ENCODE measurements at regions of chr9 and their contacts with region 1.

Region 1: GRCh38 chr9:126500684-126501382 is 112.9 kb upstream of the LMX1B start:
- DNase-seq: peak; percentile 42 to 81 (median 66)
- ATAC-seq: peak; percentile 67
- H3K4me3 ChIP-seq: no peak overlapping the region
- H3K4me3 Mint-ChIP-seq: peak overlapping the region; percentile 55
- H3K27ac ChIP-seq: no peak overlapping the region
- H3K27ac Mint-ChIP-seq: no peak overlapping the region
- H3K4me1 ChIP-seq: peaks cover 13% of the 10 kb centered on the region
- H3K4me1 Mint-ChIP-seq: peaks cover 20% of the 10 kb centered on the region
- H3K27me3 ChIP-seq: peaks cover 0 to 2% of the 10 kb centered on the region in 2 experiments
- H3K27me3 Mint-ChIP-seq: peaks cover 2% of the 10 kb centered on the region
- CTCF ChIP-seq: peak; percentile 94

Region 2: DNA sequence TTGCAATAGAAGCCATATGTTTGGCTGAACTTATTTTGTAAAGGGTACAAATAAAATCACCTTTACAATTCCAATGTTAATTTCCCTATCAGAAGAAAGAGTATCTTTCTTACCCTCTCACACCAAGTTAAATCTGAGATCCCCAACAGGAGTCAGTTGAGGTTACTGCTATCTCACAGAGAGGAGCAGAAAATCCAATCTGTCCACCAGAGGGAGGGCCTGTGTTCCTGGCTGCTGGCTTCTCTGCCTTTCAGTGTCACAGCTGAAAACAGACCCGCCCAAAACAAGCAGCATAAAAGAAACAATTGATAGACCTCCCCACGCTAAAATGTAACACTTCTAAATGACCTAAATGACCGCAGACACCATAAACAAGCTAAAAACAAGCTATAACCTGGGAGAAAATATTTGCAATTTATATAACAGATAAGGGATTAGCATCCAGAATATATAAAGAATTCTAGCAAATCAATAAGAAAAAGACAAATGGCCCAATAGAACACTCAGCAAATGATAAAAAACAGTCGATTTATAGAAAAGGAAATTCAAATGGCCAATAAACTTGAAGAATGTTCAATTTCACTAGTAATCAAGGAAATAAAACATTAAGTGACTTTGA is 198.7 kb before region 1 on chr9:
- CTCF ChIA-PET with region 1: interaction called, 10 read pairs
- POLR2A ChIA-PET with region 1: no interaction called
- intact Hi-C with region 1: no loop called
- DNase-seq: peak; percentile 22 to 79 (median 59)
- ATAC-seq: peak; percentile 87
- H3K4me3 ChIP-seq: no peak overlapping the region
- H3K4me3 Mint-ChIP-seq: no peak overlapping the region
- H3K27ac ChIP-seq: no peak overlapping the region
- H3K27ac Mint-ChIP-seq: no peak overlapping the region
- H3K4me1 ChIP-seq: no peaks in the 10 kb centered on the region
- H3K4me1 Mint-ChIP-seq: peaks cover 3% of the 10 kb centered on the region
- H3K27me3 ChIP-seq: no peaks in the 10 kb centered on the region
- H3K27me3 Mint-ChIP-seq: peaks cover 4% of the 10 kb centered on the region
- CTCF ChIP-seq: peak; percentile 71

Region 3: GRCh38 chr9:126482361-126483044 is 18.3 kb before region 1 on chr9:
- CTCF ChIA-PET with region 1: interaction called, 15 read pairs
- POLR2A ChIA-PET with region 1: no interaction called
- intact Hi-C with region 1: no loop called
- DNase-seq: no peak
- ATAC-seq: no peak
- H3K4me3 ChIP-seq: no peak overlapping the region
- H3K4me3 Mint-ChIP-seq: no peak overlapping the region
- H3K27ac ChIP-seq: no peak overlapping the region
- H3K27ac Mint-ChIP-seq: no peak overlapping the region
- H3K4me1 ChIP-seq: peaks cover 20% of the 10 kb centered on the region
- H3K4me1 Mint-ChIP-seq: peaks cover 30% of the 10 kb centered on the region
- H3K27me3 ChIP-seq: no peaks in the 10 kb centered on the region
- H3K27me3 Mint-ChIP-seq: no peaks in the 10 kb centered on the region
- CTCF ChIP-seq: no peak

Region 4: DNA sequence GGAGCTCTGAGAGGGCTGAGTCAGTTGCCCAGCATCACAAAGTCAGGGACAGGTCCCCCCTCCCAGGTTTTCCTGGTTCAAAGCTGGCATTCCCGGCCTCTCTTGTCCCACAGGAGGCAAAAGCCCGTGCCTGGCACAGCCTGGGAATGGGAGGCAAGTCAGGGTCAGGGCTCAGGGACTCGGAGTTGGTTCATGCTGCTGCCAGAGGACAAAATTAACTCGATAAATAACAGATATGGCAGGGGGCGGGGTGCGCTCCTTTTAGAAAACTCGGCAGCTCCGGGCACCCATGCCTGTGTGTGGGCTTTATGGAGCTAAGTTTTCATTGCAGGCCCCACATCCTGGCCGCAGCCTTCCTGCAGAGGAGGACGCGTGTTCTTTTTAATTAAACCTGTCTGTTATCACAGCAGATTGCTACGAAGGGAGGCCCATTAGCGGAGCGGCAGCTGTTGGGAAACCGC is 50.1 kb after region 1 on chr9:
- CTCF ChIA-PET with region 1: interaction called, 187 read pairs
- POLR2A ChIA-PET with region 1: no interaction called
- intact Hi-C with region 1: no loop called
- DNase-seq: no peak
- ATAC-seq: no peak
- H3K4me3 ChIP-seq: no peak overlapping the region
- H3K4me3 Mint-ChIP-seq: no peak overlapping the region
- H3K27ac ChIP-seq: no peak overlapping the region
- H3K27ac Mint-ChIP-seq: no peak overlapping the region
- H3K4me1 ChIP-seq: no peaks in the 10 kb centered on the region
- H3K4me1 Mint-ChIP-seq: no peaks in the 10 kb centered on the region
- H3K27me3 ChIP-seq: no peaks in the 10 kb centered on the region
- H3K27me3 Mint-ChIP-seq: no peaks in the 10 kb centered on the region
- CTCF ChIP-seq: no peak

Region 5: GRCh38 chr9:126564711-126565110 is 63.9 kb after region 1 on chr9:
- CTCF ChIA-PET with region 1: interaction called, 29 read pairs
- POLR2A ChIA-PET with region 1: no interaction called
- intact Hi-C with region 1: no loop called
- DNase-seq: no peak
- ATAC-seq: no peak
- H3K4me3 ChIP-seq: no peak overlapping the region
- H3K4me3 Mint-ChIP-seq: no peak overlapping the region
- H3K27ac ChIP-seq: no peak overlapping the region
- H3K27ac Mint-ChIP-seq: no peak overlapping the region
- H3K4me1 ChIP-seq: no peaks in the 10 kb centered on the region
- H3K4me1 Mint-ChIP-seq: no peaks in the 10 kb centered on the region
- H3K27me3 ChIP-seq: no peaks in the 10 kb centered on the region
- H3K27me3 Mint-ChIP-seq: peaks cover 40% of the 10 kb centered on the region
- CTCF ChIP-seq: no peak

Measured in CD8-positive, alpha-beta T cell (primary cell).